ENCODE measurements at regions of chr9 and their contacts with region 1.

Region 1: GRCh38 chr9:33264473-33265177 is at the starts of genes BAG1 and CHMP5:
- DNase-seq: peak; percentile 94 to 97
- H3K4me3 ChIP-seq: peak within 1 kb of the TSS; percentile 89
- H3K27ac ChIP-seq: peak within 1 kb of the TSS; percentile 53
- H3K4me1 ChIP-seq: peaks cover 15% of the 10 kb centered on the region
- H3K27me3 ChIP-seq: no peaks in the 10 kb centered on the region
- CTCF ChIP-seq: peak; percentile 49; the same call in 1 of the 2 replicates
- total RNA-seq, gene BAG1: 21.9 and 35.5 TPM in 2 replicates
- total RNA-seq, gene CHMP5: 63.0 and 78.2 TPM in 2 replicates

Region 2: GRCh38 chr9:33241298-33241697 is 23.3 kb before region 1 on chr9:
- CTCF ChIA-PET with region 1: no interaction called
- POLR2A ChIA-PET with region 1: interaction called, 14 read pairs
- intact Hi-C with region 1: no loop called
- DNase-seq: no peak
- H3K4me3 ChIP-seq: no peak overlapping the region
- H3K27ac ChIP-seq: no peak overlapping the region
- H3K4me1 ChIP-seq: no peaks in the 10 kb centered on the region
- H3K27me3 ChIP-seq: no peaks in the 10 kb centered on the region
- CTCF ChIP-seq: no peak

Measured in PC-9 (cell line).